CD8-positive, alpha-beta T cell (primary cell): ENCODE measurements at regions of chr11 and their contacts with region 1.

Region 1: GRCh38 chr11:86193297-86194095 is 51.1 kb upstream of the EED start:
- DNase-seq: peak; percentile 26 to 86 (median 59)
- ATAC-seq: peak; percentile 100
- H3K4me3 ChIP-seq: peak overlapping the region; percentile 37 to 54
- H3K4me3 Mint-ChIP-seq: peak overlapping the region; percentile 83
- H3K27ac ChIP-seq: peak overlapping the region in 1 of 2 experiments; percentile 60
- H3K27ac Mint-ChIP-seq: peak overlapping the region; percentile 73
- H3K4me1 ChIP-seq: peaks cover 6% of the 10 kb centered on the region
- H3K4me1 Mint-ChIP-seq: peaks cover 15% of the 10 kb centered on the region
- H3K27me3 ChIP-seq: no peaks in the 10 kb centered on the region
- H3K27me3 Mint-ChIP-seq: no peaks in the 10 kb centered on the region
- CTCF ChIP-seq: peak; percentile 80

Region 2: GRCh38 chr11:86035164-86035563 is 158.3 kb before region 1 on chr11:
- CTCF ChIA-PET with region 1: interaction called, 211 read pairs
- POLR2A ChIA-PET with region 1: no interaction called
- intact Hi-C with region 1: no loop called
- DNase-seq: no peak
- ATAC-seq: no peak
- H3K4me3 ChIP-seq: no peak overlapping the region
- H3K4me3 Mint-ChIP-seq: no peak overlapping the region
- H3K27ac ChIP-seq: no peak overlapping the region
- H3K27ac Mint-ChIP-seq: no peak overlapping the region
- H3K4me1 ChIP-seq: peaks cover 21% of the 10 kb centered on the region
- H3K4me1 Mint-ChIP-seq: peaks cover 59% of the 10 kb centered on the region
- H3K27me3 ChIP-seq: no peaks in the 10 kb centered on the region
- H3K27me3 Mint-ChIP-seq: no peaks in the 10 kb centered on the region
- CTCF ChIP-seq: no peak

Region 3: GRCh38 chr11:86041975-86042378 is 151.5 kb before region 1 on chr11:
- CTCF ChIA-PET with region 1: interaction called, 211 read pairs
- POLR2A ChIA-PET with region 1: interaction called, 11 read pairs
- intact Hi-C with region 1: loop called (anchors 1 kb)
- DNase-seq: peak in 6 of 9 experiments; percentile 30 to 89 (median 43)
- ATAC-seq: peak; percentile 94
- H3K4me3 ChIP-seq: no peak overlapping the region
- H3K4me3 Mint-ChIP-seq: no peak overlapping the region
- H3K27ac ChIP-seq: peak overlapping the region in 1 of 2 experiments; percentile 47
- H3K27ac Mint-ChIP-seq: peak overlapping the region; percentile 66
- H3K4me1 ChIP-seq: peaks cover 46% of the 10 kb centered on the region
- H3K4me1 Mint-ChIP-seq: peaks cover 65% of the 10 kb centered on the region
- H3K27me3 ChIP-seq: no peaks in the 10 kb centered on the region
- H3K27me3 Mint-ChIP-seq: no peaks in the 10 kb centered on the region
- CTCF ChIP-seq: peak; percentile 67

Region 4: DNA sequence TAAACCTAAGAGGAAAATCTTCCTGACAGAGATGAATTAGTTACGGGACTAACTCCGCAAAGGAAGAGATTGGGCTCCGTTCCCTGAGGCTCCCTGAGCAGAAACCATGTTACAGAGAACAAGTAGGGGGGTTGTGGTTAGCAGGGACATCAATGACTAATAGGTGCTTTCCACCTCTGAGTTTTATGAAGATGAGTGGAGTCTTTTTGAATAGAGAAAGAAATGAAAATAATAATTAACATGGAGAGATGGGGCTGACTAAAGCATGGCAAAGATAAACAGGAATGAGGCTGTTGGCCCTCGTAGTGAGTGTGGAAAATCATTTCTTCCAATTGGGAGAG is 77.1 kb before region 1 on chr11:
- CTCF ChIA-PET with region 1: interaction called, 11 read pairs
- POLR2A ChIA-PET with region 1: no interaction called
- intact Hi-C with region 1: no loop called
- DNase-seq: peak in 4 of 9 experiments; percentile 18 to 73 (median 42)
- ATAC-seq: peak; percentile 70
- H3K4me3 ChIP-seq: no peak overlapping the region
- H3K4me3 Mint-ChIP-seq: no peak overlapping the region
- H3K27ac ChIP-seq: no peak overlapping the region
- H3K27ac Mint-ChIP-seq: no peak overlapping the region
- H3K4me1 ChIP-seq: no peaks in the 10 kb centered on the region
- H3K4me1 Mint-ChIP-seq: peaks cover 12% of the 10 kb centered on the region
- H3K27me3 ChIP-seq: no peaks in the 10 kb centered on the region
- H3K27me3 Mint-ChIP-seq: no peaks in the 10 kb centered on the region
- CTCF ChIP-seq: no peak

Region 5: GRCh38 chr11:86138958-86139357 is 54.5 kb before region 1 on chr11:
- CTCF ChIA-PET with region 1: interaction called, 6 read pairs
- POLR2A ChIA-PET with region 1: no interaction called
- intact Hi-C with region 1: loop called in 1 of 2 experiments (anchors 5 kb)
- DNase-seq: peak in 5 of 9 experiments; percentile 16 to 67 (median 47)
- ATAC-seq: peak; percentile 42
- H3K4me3 ChIP-seq: peak overlapping the region in 1 of 2 experiments; percentile 6
- H3K4me3 Mint-ChIP-seq: peak overlapping the region; percentile 68
- H3K27ac ChIP-seq: peak overlapping the region; percentile 27 to 65
- H3K27ac Mint-ChIP-seq: peak overlapping the region; percentile 91
- H3K4me1 ChIP-seq: peaks cover 26% of the 10 kb centered on the region
- H3K4me1 Mint-ChIP-seq: peaks cover 44% of the 10 kb centered on the region
- H3K27me3 ChIP-seq: no peaks in the 10 kb centered on the region
- H3K27me3 Mint-ChIP-seq: no peaks in the 10 kb centered on the region
- CTCF ChIP-seq: no peak

Region 6: DNA sequence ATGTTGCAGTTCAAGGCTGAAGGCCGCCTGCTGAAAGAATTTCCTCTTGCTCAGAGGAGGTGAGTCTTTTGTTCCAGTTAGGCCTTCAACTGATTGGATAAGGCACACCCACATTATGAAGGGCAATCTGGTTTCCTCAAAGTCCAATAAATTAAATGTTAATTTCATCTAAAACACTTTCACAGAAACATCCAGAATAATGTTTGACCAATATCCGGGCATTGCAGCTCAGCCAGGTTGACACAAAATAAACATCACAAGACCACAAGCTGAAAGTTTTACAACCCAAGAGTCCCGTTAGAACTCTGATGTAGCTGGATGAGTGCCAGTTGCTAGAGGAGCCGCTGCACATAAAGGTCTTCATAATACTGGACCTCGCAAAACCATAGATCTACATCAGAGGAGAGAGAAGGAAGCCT is 13.8 kb before region 1 on chr11:
- CTCF ChIA-PET with region 1: interaction called, 10 read pairs
- POLR2A ChIA-PET with region 1: no interaction called
- intact Hi-C with region 1: no loop called
- DNase-seq: no peak
- ATAC-seq: no peak
- H3K4me3 ChIP-seq: no peak overlapping the region
- H3K4me3 Mint-ChIP-seq: no peak overlapping the region
- H3K27ac ChIP-seq: no peak overlapping the region
- H3K27ac Mint-ChIP-seq: no peak overlapping the region
- H3K4me1 ChIP-seq: no peaks in the 10 kb centered on the region
- H3K4me1 Mint-ChIP-seq: no peaks in the 10 kb centered on the region
- H3K27me3 ChIP-seq: no peaks in the 10 kb centered on the region
- H3K27me3 Mint-ChIP-seq: peaks cover 11% of the 10 kb centered on the region
- CTCF ChIP-seq: no peak

Region 7: GRCh38 chr11:86211619-86212018 is 18.1 kb after region 1 on chr11:
- CTCF ChIA-PET with region 1: interaction called, 17 read pairs
- POLR2A ChIA-PET with region 1: no interaction called
- intact Hi-C with region 1: no loop called
- DNase-seq: no peak
- ATAC-seq: no peak
- H3K4me3 ChIP-seq: no peak overlapping the region
- H3K4me3 Mint-ChIP-seq: no peak overlapping the region
- H3K27ac ChIP-seq: no peak overlapping the region
- H3K27ac Mint-ChIP-seq: no peak overlapping the region
- H3K4me1 ChIP-seq: no peaks in the 10 kb centered on the region
- H3K4me1 Mint-ChIP-seq: no peaks in the 10 kb centered on the region
- H3K27me3 ChIP-seq: no peaks in the 10 kb centered on the region
- H3K27me3 Mint-ChIP-seq: no peaks in the 10 kb centered on the region
- CTCF ChIP-seq: no peak

Region 8: GRCh38 chr11:86251345-86251744 is 57.8 kb after region 1 on chr11:
- CTCF ChIA-PET with region 1: no interaction called
- POLR2A ChIA-PET with region 1: no interaction called
- intact Hi-C with region 1: no loop called
- DNase-seq: peak in 1 of 9 experiments; percentile 15
- ATAC-seq: no peak
- H3K4me3 ChIP-seq: peak overlapping the region in 1 of 2 experiments; percentile 16
- H3K4me3 Mint-ChIP-seq: peak overlapping the region; percentile 63
- H3K27ac ChIP-seq: no peak overlapping the region
- H3K27ac Mint-ChIP-seq: no peak overlapping the region
- H3K4me1 ChIP-seq: peaks cover 20% of the 10 kb centered on the region
- H3K4me1 Mint-ChIP-seq: peaks cover 51% of the 10 kb centered on the region
- H3K27me3 ChIP-seq: no peaks in the 10 kb centered on the region
- H3K27me3 Mint-ChIP-seq: no peaks in the 10 kb centered on the region
- CTCF ChIP-seq: no peak